Psoas muscle (tissue), 8 donors: ENCODE measurements at regions of chr1 and their contacts with region 1.

Region 1: GRCh38 chr1:45803301-45803780 is at the start of gene MAST2:
- DNase-seq: peak; percentile 94 to 95
- ATAC-seq: peak; percentile 92 to 96 (median 93)
- H3K4me3 ChIP-seq: peak within 1 kb of the TSS; percentile 75
- H3K27ac ChIP-seq: peak within 1 kb of the TSS; percentile 93
- H3K4me1 ChIP-seq: peaks cover 33% of the 10 kb centered on the region
- H3K27me3 ChIP-seq: no peaks in the 10 kb centered on the region
- CTCF ChIP-seq: no peak
- total RNA-seq, gene MAST2: 159 to 266 (median 243) TPM

Region 2: GRCh38 chr1:45686317-45687013 is 116.9 kb before region 1 on chr1 and contains the start of gene GPBP1L1:
- intact Hi-C with region 1: loop called (anchors 5 to 10 kb)
- DNase-seq: peak; percentile 97 to 99
- ATAC-seq: peak; percentile 86 to 89 (median 88)
- H3K4me3 ChIP-seq: peak within 1 kb of the TSS; percentile 93
- H3K27ac ChIP-seq: peak within 1 kb of the TSS; percentile 98
- H3K4me1 ChIP-seq: peaks cover 31% of the 10 kb centered on the region
- H3K27me3 ChIP-seq: no peaks in the 10 kb centered on the region
- CTCF ChIP-seq: no peak
- total RNA-seq, gene GPBP1L1: 52.2 to 71.0 (median 64.1) TPM

Region 3: GRCh38 chr1:45750298-45751038 is 52.9 kb before region 1 on chr1 and contains the start of gene IPP:
- intact Hi-C with region 1: loop called (anchors 2 to 5 kb)
- DNase-seq: peak; percentile 98 to 99
- ATAC-seq: peak; percentile 97 to 99 (median 98)
- H3K4me3 ChIP-seq: peak within 1 kb of the TSS; percentile 74
- H3K27ac ChIP-seq: peak within 1 kb of the TSS; percentile 97
- H3K4me1 ChIP-seq: peaks cover 11% of the 10 kb centered on the region
- H3K27me3 ChIP-seq: no peaks in the 10 kb centered on the region
- CTCF ChIP-seq: peak; percentile 23
- total RNA-seq, gene IPP: 12.7 to 26.8 (median 19.6) TPM

Region 4: GRCh38 chr1:45870500-45870899 is 67.2 kb after region 1 on chr1:
- intact Hi-C with region 1: no loop called
- DNase-seq: no peak
- ATAC-seq: peak in 2 of 4 donors; percentile 40 to 43
- H3K4me3 ChIP-seq: no peak overlapping the region
- H3K27ac ChIP-seq: no peak overlapping the region
- H3K4me1 ChIP-seq: peaks cover 10% of the 10 kb centered on the region
- H3K27me3 ChIP-seq: no peaks in the 10 kb centered on the region
- CTCF ChIP-seq: no peak